ENCODE measurements at regions of chr10 and their contacts with region 1.

Region 1: GRCh38 chr10:128078136-128078969 is 47.9 kb downstream of the MKI67 start:
- DNase-seq: no peak
- H3K4me3 ChIP-seq: no peak overlapping the region
- H3K27ac ChIP-seq: no peak overlapping the region
- H3K27me3 ChIP-seq: no peaks in the 10 kb centered on the region
- CTCF ChIP-seq: peak in 55 of 56 donors; percentile 17 to 73 (median 61)

Region 2: DNA sequence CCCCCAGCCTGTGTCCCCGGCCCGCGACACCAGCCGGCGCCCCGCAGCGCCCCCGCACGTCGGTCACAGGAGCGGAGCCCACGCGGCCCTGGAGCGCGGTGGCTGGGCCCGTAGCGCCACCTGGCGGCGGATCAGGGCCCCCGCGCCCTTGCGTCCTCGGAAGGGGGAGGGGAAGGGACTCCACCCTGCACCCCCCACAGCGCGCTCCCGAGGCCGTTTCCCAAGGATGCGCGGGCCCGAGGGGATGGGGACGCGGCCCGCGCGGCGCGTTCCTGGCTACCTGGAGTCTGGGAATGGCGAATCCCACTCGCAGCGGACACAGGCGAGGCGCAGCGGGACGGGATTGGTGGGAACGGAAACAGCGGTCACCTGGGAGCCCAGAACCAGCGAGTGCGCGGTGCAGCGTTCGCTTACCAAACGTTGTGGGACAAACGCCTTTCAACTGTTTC is 71.7 kb after region 1 on chr10:
- intact Hi-C with region 1: loop called (anchors 5 kb)
- DNase-seq: peak in 8 of 10 donors; percentile 33 to 73 (median 44)
- H3K4me3 ChIP-seq: peak overlapping the region in 58 of 59 donors; percentile 31 to 71 (median 57)
- H3K27ac ChIP-seq: no peak overlapping the region
- H3K27me3 ChIP-seq: peaks cover 0 to 10% (median 0%) of the 10 kb centered on the region in 45 donors
- CTCF ChIP-seq: peak; percentile 39 to 87 (median 74)

Measured in dorsolateral prefrontal cortex (tissue), 120 donors.